Right cardiac atrium (tissue), 5 donors: ENCODE measurements at regions of chr4 and their contacts with region 1.

Region 1: GRCh38 chr4:120049732-120050494 is 16.7 kb downstream of the MAD2L1 start:
- DNase-seq: peak; percentile 55 to 77 (median 63)
- ATAC-seq: peak; percentile 88 to 94
- H3K4me3 ChIP-seq: no peak overlapping the region
- H3K27ac ChIP-seq: no peak overlapping the region
- H3K4me1 ChIP-seq: no peaks in the 10 kb centered on the region
- H3K27me3 ChIP-seq: no peaks in the 10 kb centered on the region

Region 2: GRCh38 chr4:119314356-119314755 is 735.6 kb before region 1 on chr4:
- intact Hi-C with region 1: loop called in 1 of 4 experiments (anchors 10 kb)
- DNase-seq: no peak
- ATAC-seq: peak; percentile 67 to 71
- H3K4me3 ChIP-seq: no peak overlapping the region
- H3K27ac ChIP-seq: no peak overlapping the region
- H3K4me1 ChIP-seq: no peaks in the 10 kb centered on the region
- H3K27me3 ChIP-seq: no peaks in the 10 kb centered on the region

Region 3: DNA sequence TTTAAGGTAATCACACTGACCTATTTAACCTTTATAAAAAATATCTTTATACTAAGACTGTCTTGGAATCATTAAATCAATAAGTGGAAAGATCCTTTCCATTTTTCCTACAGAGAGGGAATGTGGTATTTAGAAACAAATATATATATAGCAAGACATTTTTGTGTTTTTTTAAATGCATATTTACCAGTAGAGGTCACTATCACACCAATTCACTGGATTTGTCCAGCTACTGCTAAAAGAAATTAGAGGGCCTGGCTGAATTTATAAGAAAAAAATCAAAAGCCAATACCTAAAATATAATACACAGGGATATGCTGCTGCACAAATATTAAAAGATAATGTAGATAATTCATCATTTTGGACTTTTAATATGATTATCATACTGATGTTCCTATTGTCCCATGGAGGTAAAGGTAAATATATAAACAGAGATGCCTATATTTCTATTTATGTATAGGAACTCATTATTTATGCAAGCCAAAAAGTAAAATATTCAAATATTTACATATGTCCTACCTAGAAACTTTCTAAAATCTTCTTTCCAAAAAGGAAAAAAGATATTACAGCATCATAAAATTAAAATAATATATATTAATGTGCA is 490.8 kb before region 1 on chr4:
- intact Hi-C with region 1: loop called in 3 of 4 experiments (anchors 5 to 10 kb)
- DNase-seq: no peak
- ATAC-seq: no peak
- H3K4me3 ChIP-seq: no peak overlapping the region
- H3K27ac ChIP-seq: no peak overlapping the region
- H3K4me1 ChIP-seq: no peaks in the 10 kb centered on the region
- H3K27me3 ChIP-seq: no peaks in the 10 kb centered on the region

Region 4: DNA sequence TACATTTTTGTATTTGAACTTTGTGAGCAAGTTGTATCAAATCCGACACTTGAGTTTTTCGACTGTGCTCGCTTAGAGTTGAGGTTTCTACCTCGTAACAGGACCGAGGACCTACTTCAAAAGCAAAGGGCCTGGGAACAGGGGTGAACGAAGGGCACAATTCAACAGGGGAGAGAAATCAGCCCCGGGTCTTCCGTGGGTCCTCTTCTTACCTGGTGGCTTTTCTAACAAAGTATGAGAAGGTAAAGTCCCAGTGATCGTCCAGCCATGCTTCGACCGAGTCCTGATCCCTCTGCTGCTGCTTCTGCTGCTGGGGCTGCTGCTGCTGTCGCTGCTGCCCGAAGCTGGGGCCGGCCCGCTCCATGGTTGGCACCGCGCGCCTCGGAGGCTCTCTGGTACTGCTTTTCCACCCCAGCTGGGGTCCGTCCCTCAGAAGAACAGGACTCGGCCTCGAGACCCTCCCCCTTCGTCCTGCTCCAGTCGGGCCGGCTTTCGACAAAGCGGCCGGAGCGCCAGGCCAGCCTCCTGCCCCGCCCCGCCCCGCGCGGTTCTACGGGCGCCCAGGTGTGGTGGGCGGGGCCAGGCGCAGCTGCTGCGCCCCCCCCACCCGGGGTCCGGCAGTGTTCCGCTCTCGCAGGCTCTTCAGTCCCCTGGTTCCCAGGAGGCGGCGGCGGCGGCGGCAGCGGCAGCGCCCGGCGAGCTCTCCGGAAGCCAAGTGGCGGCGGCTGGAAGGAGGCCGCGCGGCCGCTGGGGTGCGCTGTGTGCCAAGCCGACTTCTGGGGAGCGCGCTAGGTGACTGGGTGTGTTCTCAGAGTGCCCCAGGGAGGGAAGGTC is 421.4 kb before region 1 on chr4 and contains the start of gene PDE5A:
- intact Hi-C with region 1: loop called (anchors 5 to 10 kb)
- DNase-seq: peak; percentile 77 to 92 (median 91)
- ATAC-seq: peak; percentile 92 to 93
- H3K4me3 ChIP-seq: peak within 1 kb of the TSS; percentile 61
- H3K27ac ChIP-seq: peak within 1 kb of the TSS; percentile 27
- H3K4me1 ChIP-seq: no peaks in the 10 kb centered on the region
- H3K27me3 ChIP-seq: no peaks in the 10 kb centered on the region
- total RNA-seq, gene PDE5A: 7.1 to 11.8 (median 10.2) TPM

Region 5: DNA sequence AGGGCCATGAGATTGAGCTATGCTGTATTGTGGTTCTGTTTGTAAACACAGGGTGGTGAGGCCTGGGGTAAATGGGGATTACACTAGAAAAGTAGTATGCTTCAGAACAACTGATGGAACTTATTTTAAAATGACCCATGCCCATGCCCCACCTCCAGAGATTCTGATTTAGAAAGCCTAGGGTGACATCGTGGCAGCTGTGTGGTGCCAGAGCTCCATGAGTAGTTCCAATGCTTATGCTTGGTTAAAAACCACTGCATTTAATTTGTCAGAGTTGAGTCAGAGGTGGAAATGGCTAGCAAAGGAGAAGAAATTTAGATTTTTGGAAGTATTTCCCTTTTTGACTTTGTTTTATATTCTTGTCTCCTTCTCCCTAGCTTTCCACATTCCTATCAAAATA is 357.9 kb before region 1 on chr4:
- intact Hi-C with region 1: loop called in 3 of 4 experiments (anchors 5 to 10 kb)
- DNase-seq: peak in 1 of 3 donors; percentile 48
- ATAC-seq: peak in 1 of 2 donors; percentile 76
- H3K4me3 ChIP-seq: no peak overlapping the region
- H3K27ac ChIP-seq: no peak overlapping the region
- H3K4me1 ChIP-seq: no peaks in the 10 kb centered on the region
- H3K27me3 ChIP-seq: no peaks in the 10 kb centered on the region